Heart right ventricle (tissue), 16 donors: ENCODE measurements at regions of chr12 and their contacts with region 1.

Region 1: GRCh38 chr12:120677765-120678473 is 9.0 kb upstream of the MLEC start:
- DNase-seq: peak; percentile 45 to 59
- ATAC-seq: peak; percentile 68 to 95 (median 89)
- H3K4me3 ChIP-seq: no peak overlapping the region
- H3K27ac ChIP-seq: peak overlapping the region; percentile 51 to 85 (median 78)
- H3K4me1 ChIP-seq: peaks cover 0 to 26% (median 12%) of the 10 kb centered on the region in 9 donors
- H3K27me3 ChIP-seq: no peaks in the 10 kb centered on the region
- CTCF ChIP-seq: no peak

Region 2: DNA sequence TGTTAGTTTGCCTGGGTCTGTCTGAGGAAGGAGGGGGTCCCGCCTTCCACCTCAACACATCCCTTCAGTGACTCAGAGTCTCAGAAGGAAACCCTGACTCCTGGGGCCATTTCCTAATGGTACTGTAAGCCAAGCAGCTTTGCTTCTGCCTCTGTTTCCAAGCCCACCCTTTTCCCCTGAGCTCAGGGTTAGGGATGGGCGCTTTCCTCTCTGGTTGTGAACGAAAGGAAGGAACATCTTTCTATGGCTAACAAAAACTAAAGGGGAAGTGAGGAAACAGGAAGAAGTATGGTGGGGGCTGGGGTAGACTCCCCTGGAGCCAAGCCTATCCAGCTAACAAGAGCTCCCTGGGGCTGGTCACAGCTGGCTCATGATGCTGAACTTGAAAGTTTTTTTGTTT is 20.7 kb after region 1 on chr12:
- intact Hi-C with region 1: loop called in 1 of 10 experiments (anchors 1 kb)
- DNase-seq: peak in 1 of 2 donors; percentile 45
- ATAC-seq: peak; percentile 49 to 91 (median 76)
- H3K4me3 ChIP-seq: no peak overlapping the region
- H3K27ac ChIP-seq: peak overlapping the region; percentile 54 to 92 (median 84)
- H3K4me1 ChIP-seq: peaks cover 24 to 96% (median 76%) of the 10 kb centered on the region in 9 donors
- H3K27me3 ChIP-seq: no peaks in the 10 kb centered on the region
- CTCF ChIP-seq: no peak

Region 3: DNA sequence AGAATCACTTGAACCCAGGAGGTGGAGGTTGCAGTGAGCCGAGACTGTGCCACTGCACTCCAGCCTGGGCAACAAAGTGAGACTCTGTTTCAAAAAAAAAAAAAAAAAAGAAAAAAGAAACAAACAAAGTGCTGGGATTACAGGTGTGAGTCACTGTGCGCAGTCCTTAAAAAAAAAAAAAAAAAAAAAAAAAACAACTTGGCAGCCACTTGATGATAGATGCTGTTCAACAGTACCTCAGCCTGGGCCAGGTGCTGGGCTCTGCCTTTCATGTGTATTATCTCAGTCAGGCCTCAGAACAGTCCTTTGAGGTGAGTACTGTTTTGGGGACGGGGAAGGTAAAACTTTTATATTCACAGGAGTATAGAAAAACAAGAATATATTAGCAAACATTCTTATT is 57.3 kb after region 1 on chr12:
- intact Hi-C with region 1: no loop called
- DNase-seq: no peak
- ATAC-seq: no peak
- H3K4me3 ChIP-seq: no peak overlapping the region
- H3K27ac ChIP-seq: no peak overlapping the region
- H3K4me1 ChIP-seq: no peaks in the 10 kb centered on the region
- H3K27me3 ChIP-seq: no peaks in the 10 kb centered on the region
- CTCF ChIP-seq: no peak

Region 4: DNA sequence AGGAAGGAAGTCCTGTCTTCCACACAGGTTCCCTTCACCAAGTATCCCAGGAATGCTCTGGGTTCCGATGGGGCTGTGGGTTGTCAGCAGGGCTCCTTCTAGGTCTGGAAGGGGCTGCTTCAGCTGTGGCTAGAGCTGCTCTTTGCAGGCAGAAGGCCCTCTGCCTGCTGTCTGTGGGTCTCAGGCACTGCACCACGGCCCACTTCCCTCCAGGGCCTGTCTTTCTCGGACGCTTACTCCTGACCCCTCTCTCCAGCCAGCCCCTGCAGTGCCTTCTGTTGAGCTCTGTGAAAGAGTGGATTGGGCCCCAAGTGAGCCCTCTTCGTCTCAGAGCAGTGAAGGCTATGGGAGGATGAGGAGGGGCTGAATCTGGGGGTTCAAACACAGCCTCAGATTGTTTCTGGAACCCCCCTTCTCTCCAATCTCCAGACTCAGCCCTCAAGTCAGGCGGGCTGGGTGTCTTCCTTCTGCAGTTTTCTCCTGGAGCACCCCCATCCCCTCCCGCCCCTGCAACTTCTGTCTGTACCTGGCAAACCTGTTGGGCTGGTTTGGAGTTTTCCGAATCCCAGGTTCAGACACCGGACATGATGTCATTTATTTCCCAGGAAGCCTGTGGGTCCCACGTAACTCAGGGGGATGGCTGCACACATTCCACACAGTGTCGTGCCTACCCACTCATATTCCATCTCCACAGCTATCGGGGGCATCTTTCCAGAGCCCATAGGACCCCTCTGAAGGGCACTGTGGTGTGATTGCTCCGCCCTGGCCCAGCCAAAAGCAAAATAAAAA is 251.1 kb after region 1 on chr12:
- intact Hi-C with region 1: no loop called
- DNase-seq: no peak
- ATAC-seq: no peak
- H3K4me3 ChIP-seq: no peak overlapping the region
- H3K27ac ChIP-seq: no peak overlapping the region
- H3K4me1 ChIP-seq: no peaks in the 10 kb centered on the region
- H3K27me3 ChIP-seq: no peaks in the 10 kb centered on the region
- CTCF ChIP-seq: no peak